ENCODE measurements at regions of chr7 and their contacts with region 1.

Region 1: GRCh38 chr7:100132697-100133151 is 6.0 kb downstream of the MBLAC1 start:
- DNase-seq: peak in 8 of 9 donors; percentile 53 to 77 (median 64)
- ATAC-seq: peak; percentile 89
- H3K4me3 ChIP-seq: no peak overlapping the region
- H3K4me3 Mint-ChIP-seq: no peak overlapping the region
- H3K27ac ChIP-seq: no peak overlapping the region
- H3K27ac Mint-ChIP-seq: peak overlapping the region in 7 of 9 donors; percentile 24 to 73 (median 49)
- H3K4me1 ChIP-seq: peaks cover 13 to 24% of the 10 kb centered on the region in 2 donors
- H3K4me1 Mint-ChIP-seq: peaks cover 4 to 31% (median 23%) of the 10 kb centered on the region in 7 donors
- H3K27me3 ChIP-seq: no peaks in the 10 kb centered on the region
- H3K27me3 Mint-ChIP-seq: no peaks in the 10 kb centered on the region

Region 2: DNA sequence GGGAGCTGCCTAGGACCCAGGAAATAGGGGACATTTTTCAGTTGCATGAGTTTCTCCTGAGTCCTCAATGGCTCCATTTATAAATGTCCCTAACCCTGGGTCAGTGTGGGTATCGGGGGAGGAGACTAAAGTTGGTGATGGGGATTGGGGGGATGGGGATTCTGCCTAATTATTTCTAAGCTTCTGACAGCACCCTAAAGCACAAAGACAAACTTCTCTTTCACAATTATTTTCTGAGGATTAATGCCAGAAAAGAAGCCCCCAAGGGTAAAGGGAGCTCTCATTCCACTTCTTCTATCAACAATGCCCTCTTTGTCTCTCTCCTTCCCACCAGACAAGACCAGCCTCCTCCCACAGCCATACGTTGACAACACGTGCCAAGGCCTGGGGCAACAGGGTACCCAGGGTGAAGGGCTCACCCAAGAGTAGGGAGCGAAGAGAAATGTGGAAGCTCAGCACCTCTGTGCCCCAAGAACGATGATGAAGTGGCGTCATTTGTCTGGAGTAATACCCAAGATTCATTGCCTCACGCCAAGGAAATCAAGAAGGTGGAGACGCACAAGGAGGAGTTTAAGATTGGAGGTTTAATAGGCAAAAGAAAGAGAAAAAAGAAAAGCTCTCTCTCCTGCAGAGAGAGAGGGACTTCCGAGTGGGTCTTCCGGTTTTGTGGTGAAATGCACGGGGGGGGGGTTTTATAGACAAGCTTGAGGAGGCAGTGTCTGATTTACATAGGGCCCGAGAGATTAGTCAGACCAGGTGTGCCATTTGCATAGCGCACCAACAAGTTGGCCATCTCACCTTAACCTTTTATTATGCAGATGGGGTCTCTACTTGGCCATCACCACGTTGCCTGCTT is 188.9 kb before region 1 on chr7:
- CTCF ChIA-PET with region 1: no interaction called
- POLR2A ChIA-PET with region 1: no interaction called
- intact Hi-C with region 1: no loop called
- DNase-seq: no peak
- ATAC-seq: no peak
- H3K4me3 ChIP-seq: peak overlapping the region; percentile 26
- H3K4me3 Mint-ChIP-seq: peak overlapping the region; percentile 21 to 72 (median 55)
- H3K27ac ChIP-seq: no peak overlapping the region
- H3K27ac Mint-ChIP-seq: peak overlapping the region in 5 of 9 donors; percentile 3 to 81 (median 64)
- H3K4me1 ChIP-seq: peaks cover 0 to 4% of the 10 kb centered on the region in 2 donors
- H3K4me1 Mint-ChIP-seq: peaks cover 5 to 15% (median 12%) of the 10 kb centered on the region in 7 donors
- H3K27me3 ChIP-seq: no peaks in the 10 kb centered on the region
- H3K27me3 Mint-ChIP-seq: peaks cover 5 to 28% (median 23%) of the 10 kb centered on the region in 5 donors

Region 3: DNA sequence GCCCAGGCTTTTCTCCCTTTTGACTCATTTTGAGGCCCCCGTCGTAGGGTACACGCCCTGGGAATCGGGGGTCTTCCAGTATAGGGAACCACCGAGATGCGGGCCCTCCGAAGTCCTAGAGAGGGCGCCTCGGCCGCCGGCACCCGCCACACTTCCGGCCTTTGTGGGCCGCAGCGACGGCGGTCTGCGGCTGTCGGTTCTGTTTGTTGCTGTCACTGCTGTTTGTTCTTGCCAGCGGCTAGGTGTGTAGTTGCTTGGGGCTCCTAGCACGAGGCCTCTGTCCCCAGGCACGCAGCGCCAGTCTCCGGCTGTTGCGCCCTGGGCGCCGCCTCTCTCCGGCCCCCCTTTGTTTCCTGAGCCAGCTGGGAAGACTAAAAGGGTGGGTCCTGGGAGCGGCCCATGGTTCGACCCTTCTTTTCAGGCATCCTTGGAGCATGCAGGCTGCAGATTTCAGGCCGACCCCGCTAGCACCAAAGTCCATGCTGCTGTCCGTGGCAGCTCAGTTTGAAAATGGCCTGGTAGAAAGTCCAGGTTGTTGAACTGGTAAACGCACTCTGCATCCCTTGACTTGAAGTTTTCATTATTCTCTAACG is 135.1 kb before region 1 on chr7:
- CTCF ChIA-PET with region 1: interaction called, 7 read pairs
- POLR2A ChIA-PET with region 1: interaction called, 3 read pairs
- intact Hi-C with region 1: loop called (anchors 1 kb)
- DNase-seq: peak; percentile 55 to 76 (median 72)
- ATAC-seq: peak; percentile 96
- H3K4me3 ChIP-seq: peak overlapping the region; percentile 43
- H3K4me3 Mint-ChIP-seq: peak overlapping the region; percentile 71 to 85 (median 76)
- H3K27ac ChIP-seq: peak overlapping the region; percentile 71
- H3K27ac Mint-ChIP-seq: peak overlapping the region; percentile 57 to 95 (median 87)
- H3K4me1 ChIP-seq: peaks cover 7 to 11% of the 10 kb centered on the region in 2 donors
- H3K4me1 Mint-ChIP-seq: peaks cover 7 to 21% (median 18%) of the 10 kb centered on the region in 7 donors
- H3K27me3 ChIP-seq: no peaks in the 10 kb centered on the region
- H3K27me3 Mint-ChIP-seq: peaks cover 0 to 3% (median 0%) of the 10 kb centered on the region in 5 donors

Region 4: GRCh38 chr7:100148559-100149350 is 16.0 kb after region 1 on chr7 and contains the start of gene LAMTOR4:
- CTCF ChIA-PET with region 1: interaction called, 26 read pairs
- POLR2A ChIA-PET with region 1: interaction called, 16 read pairs
- intact Hi-C with region 1: loop called (anchors 1 to 2 kb)
- DNase-seq: peak; percentile 84 to 99 (median 97)
- ATAC-seq: peak; percentile 98
- H3K4me3 ChIP-seq: peak within 1 kb of the TSS; percentile 97
- H3K4me3 Mint-ChIP-seq: peak within 1 kb of the TSS; percentile 87 to 100 (median 96)
- H3K27ac ChIP-seq: peak within 1 kb of the TSS; percentile 98
- H3K27ac Mint-ChIP-seq: peak within 1 kb of the TSS; percentile 95 to 99 (median 98)
- H3K4me1 ChIP-seq: peaks cover 15 to 19% of the 10 kb centered on the region in 2 donors
- H3K4me1 Mint-ChIP-seq: peaks cover 27 to 45% (median 38%) of the 10 kb centered on the region in 7 donors
- H3K27me3 ChIP-seq: no peaks in the 10 kb centered on the region
- H3K27me3 Mint-ChIP-seq: no peaks in the 10 kb centered on the region
- total RNA-seq, gene LAMTOR4: 132 to 200 (median 173) TPM

Region 5: DNA sequence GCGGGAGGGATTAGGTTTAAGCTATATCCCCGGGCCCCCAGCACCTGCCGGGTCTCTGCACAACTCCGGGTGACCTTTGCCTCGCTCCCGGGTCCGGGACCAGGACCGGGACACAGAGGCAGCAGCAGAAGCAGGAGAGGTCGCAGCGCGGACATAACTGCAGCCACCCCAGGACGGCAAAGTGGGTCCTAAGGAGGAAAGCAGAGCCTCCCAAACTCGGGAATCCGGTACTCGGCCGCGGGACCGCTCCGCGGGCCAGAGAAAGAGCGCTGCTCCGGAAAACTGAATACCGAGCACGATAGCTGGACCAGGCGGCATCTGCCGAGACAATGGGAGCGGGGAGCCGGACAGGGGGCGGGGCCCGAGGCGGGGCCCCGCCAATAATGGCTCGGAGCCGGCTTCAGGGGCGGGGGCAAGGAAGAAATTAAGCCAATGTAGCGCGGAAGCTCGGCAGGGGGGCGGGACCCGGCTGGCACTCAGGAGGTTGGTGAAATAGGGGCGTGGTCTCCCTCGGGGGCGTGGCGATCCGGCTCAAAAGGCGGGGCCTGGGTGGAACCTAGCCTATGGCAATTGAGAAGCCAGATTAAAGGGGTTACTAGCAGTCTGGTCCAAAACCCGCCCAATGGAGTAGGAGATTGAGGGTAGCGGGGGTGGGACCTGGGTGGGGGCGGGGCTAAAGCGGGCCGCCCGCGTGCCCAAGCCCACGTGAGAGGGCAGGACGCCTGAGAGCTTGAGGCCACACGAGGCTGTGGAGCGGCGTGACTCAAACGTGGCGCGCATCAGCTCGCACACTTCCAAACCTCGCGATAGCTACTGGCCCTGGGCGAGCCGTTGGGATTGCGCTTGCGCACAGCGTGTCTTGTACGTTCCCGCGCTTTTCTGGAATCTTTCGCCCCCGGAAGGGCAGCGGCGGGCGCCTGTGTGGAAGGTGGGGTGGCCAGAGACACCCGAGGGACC is 44.6 kb after region 1 on chr7 and contains the starts of genes GPC2 and STAG3:
- CTCF ChIA-PET with region 1: interaction called, 14 read pairs
- POLR2A ChIA-PET with region 1: interaction called, 5 read pairs
- intact Hi-C with region 1: no loop called
- DNase-seq: peak; percentile 95 to 99 (median 98)
- ATAC-seq: peak; percentile 97
- H3K4me3 ChIP-seq: peak within 1 kb of the TSS; percentile 70
- H3K4me3 Mint-ChIP-seq: peak within 1 kb of the TSS; percentile 76 to 84 (median 80)
- H3K27ac ChIP-seq: peak within 1 kb of the TSS; percentile 76
- H3K27ac Mint-ChIP-seq: peak within 1 kb of the TSS; percentile 42 to 92 (median 78)
- H3K4me1 ChIP-seq: peaks cover 7 to 28% of the 10 kb centered on the region in 2 donors
- H3K4me1 Mint-ChIP-seq: peaks cover 28 to 67% (median 52%) of the 10 kb centered on the region in 7 donors
- H3K27me3 ChIP-seq: no peaks in the 10 kb centered on the region
- H3K27me3 Mint-ChIP-seq: peaks cover 0 to 4% (median 0%) of the 10 kb centered on the region in 5 donors
- total RNA-seq, gene GPC2: 8.1 to 30.6 (median 18.2) TPM
- total RNA-seq, gene STAG3: 5.5 to 24.6 (median 9.5) TPM

Region 6: DNA sequence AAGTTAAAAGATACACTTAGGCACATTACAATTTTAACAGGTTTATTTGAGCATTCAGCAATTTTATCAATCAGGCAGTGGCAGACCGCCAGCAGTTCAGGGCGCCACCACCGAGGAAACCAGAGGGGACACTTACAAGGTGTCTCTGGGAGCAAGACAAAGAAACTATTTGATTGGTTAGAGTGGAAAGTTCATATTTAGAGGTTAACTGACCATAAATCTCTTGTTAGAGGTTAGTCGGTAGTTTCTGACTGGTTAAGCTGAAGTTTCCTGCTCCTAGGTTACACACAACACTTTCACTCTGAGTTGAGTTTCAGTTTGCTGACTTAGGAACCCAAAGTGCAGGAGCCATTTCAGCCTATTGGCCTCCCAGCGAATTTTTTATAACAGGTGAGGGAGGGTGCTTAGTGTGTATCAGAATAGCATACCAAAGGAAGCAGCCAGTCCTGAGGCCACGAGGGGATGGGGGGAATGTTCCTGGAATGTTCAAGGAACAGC is 76.2 kb after region 1 on chr7:
- CTCF ChIA-PET with region 1: interaction called, 21 read pairs
- POLR2A ChIA-PET with region 1: interaction called, 6 read pairs
- intact Hi-C with region 1: no loop called
- DNase-seq: peak in 6 of 9 donors; percentile 29 to 38 (median 34)
- ATAC-seq: peak; percentile 54
- H3K4me3 ChIP-seq: peak overlapping the region; percentile 45
- H3K4me3 Mint-ChIP-seq: peak overlapping the region; percentile 46 to 77 (median 74)
- H3K27ac ChIP-seq: peak overlapping the region; percentile 49
- H3K27ac Mint-ChIP-seq: peak overlapping the region; percentile 66 to 98 (median 87)
- H3K4me1 ChIP-seq: peaks cover 44 to 45% of the 10 kb centered on the region in 2 donors
- H3K4me1 Mint-ChIP-seq: peaks cover 39 to 56% (median 54%) of the 10 kb centered on the region in 7 donors
- H3K27me3 ChIP-seq: no peaks in the 10 kb centered on the region
- H3K27me3 Mint-ChIP-seq: no peaks in the 10 kb centered on the region

Region 7: GRCh38 chr7:100342765-100343164 is 210.0 kb after region 1 on chr7:
- CTCF ChIA-PET with region 1: interaction called, 8 read pairs
- POLR2A ChIA-PET with region 1: interaction called, 4 read pairs
- intact Hi-C with region 1: loop called (anchors 1 to 5 kb)
- DNase-seq: no peak
- ATAC-seq: no peak
- H3K4me3 ChIP-seq: no peak overlapping the region
- H3K4me3 Mint-ChIP-seq: no peak overlapping the region
- H3K27ac ChIP-seq: peak overlapping the region; percentile 38
- H3K27ac Mint-ChIP-seq: peak overlapping the region; percentile 49 to 90 (median 73)
- H3K4me1 ChIP-seq: peaks cover 4 to 9% of the 10 kb centered on the region in 2 donors
- H3K4me1 Mint-ChIP-seq: peaks cover 6 to 46% (median 34%) of the 10 kb centered on the region in 7 donors
- H3K27me3 ChIP-seq: no peaks in the 10 kb centered on the region
- H3K27me3 Mint-ChIP-seq: no peaks in the 10 kb centered on the region

Region 8: GRCh38 chr7:100837099-100837836 is 704.5 kb after region 1 on chr7:
- CTCF ChIA-PET with region 1: no interaction called
- POLR2A ChIA-PET with region 1: no interaction called
- intact Hi-C with region 1: no loop called
- DNase-seq: peak; percentile 42 to 65 (median 59)
- ATAC-seq: peak; percentile 97
- H3K4me3 ChIP-seq: peak overlapping the region; percentile 57
- H3K4me3 Mint-ChIP-seq: peak overlapping the region; percentile 80 to 90 (median 86)
- H3K27ac ChIP-seq: peak overlapping the region; percentile 59
- H3K27ac Mint-ChIP-seq: peak overlapping the region; percentile 64 to 92 (median 77)
- H3K4me1 ChIP-seq: no peaks in the 10 kb centered on the region
- H3K4me1 Mint-ChIP-seq: peaks cover 5 to 19% (median 16%) of the 10 kb centered on the region in 7 donors
- H3K27me3 ChIP-seq: no peaks in the 10 kb centered on the region
- H3K27me3 Mint-ChIP-seq: no peaks in the 10 kb centered on the region

Measured in naive thymus-derived CD4-positive, alpha-beta T cell (primary cell).